CD8-positive, alpha-beta T cell (primary cell): ENCODE measurements at regions of chr20 and their contacts with region 1.

Region 1: DNA sequence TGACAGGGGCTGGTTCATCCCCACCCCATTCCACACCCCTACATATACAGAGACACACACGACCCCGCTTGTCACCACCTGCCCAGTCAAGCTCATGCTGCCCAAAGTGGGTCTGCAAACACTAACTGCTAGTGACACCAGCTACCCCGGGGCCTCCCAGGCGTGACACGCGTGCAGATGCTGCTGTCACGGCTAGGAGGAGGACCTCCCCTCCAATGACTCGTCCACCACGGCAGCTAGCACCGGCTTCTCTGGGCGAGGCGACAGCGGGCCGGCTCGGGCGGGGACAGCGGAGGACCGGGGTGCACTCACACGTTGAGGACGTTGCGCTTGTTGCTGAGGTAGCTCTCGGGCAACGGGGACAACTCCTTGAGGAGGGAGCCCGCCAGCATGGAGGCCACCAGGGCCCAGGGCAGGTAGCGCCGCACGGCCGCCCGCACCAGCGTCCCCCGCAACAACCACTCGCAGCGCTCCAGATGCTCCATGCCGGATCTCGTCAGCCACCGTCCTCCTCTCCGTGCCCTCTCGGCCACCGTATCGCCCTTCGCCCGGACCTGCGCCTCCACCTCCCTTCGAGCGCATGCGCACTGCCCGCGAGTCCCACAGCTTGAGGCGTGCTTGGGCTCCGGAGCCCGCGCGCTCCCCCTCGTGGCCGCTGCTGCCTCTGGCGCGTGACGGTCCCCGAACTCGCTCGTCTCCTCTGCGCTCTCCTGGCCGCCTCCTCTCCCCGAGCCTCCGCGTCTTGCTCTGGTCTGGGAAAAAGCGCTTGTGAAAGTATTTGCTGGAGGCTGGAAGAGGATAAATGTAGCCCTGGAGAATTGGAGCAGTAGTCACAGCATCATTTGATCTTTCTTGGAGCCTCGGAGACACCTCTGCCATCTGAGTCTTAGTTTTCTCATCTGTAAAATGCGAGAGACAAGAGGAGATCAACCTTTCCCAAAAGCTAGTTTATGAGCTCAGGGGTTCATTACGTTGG is at the start of gene FITM2:
- DNase-seq: peak; percentile 96 to 99 (median 99)
- ATAC-seq: peak; percentile 95
- H3K4me3 ChIP-seq: peak within 1 kb of the TSS; percentile 73 to 89
- H3K4me3 Mint-ChIP-seq: peak within 1 kb of the TSS; percentile 96
- H3K27ac ChIP-seq: peak within 1 kb of the TSS; percentile 38 to 56
- H3K27ac Mint-ChIP-seq: peak within 1 kb of the TSS; percentile 89
- H3K4me1 ChIP-seq: peaks cover 17% of the 10 kb centered on the region
- H3K4me1 Mint-ChIP-seq: peaks cover 33% of the 10 kb centered on the region
- H3K27me3 ChIP-seq: no peaks in the 10 kb centered on the region
- H3K27me3 Mint-ChIP-seq: no peaks in the 10 kb centered on the region
- CTCF ChIP-seq: peak; percentile 87
- total RNA-seq, gene FITM2: 3.3 to 3.4 TPM

Region 2: GRCh38 chr20:43590392-43591323 is 720.3 kb before region 1 on chr20 and contains the start of gene IFT52:
- CTCF ChIA-PET with region 1: no interaction called
- POLR2A ChIA-PET with region 1: no interaction called
- intact Hi-C with region 1: loop called in 1 of 2 experiments (anchors 2 kb)
- DNase-seq: peak; percentile 79 to 96 (median 89)
- ATAC-seq: peak; percentile 98
- H3K4me3 ChIP-seq: peak within 1 kb of the TSS; percentile 62 to 88
- H3K4me3 Mint-ChIP-seq: peak within 1 kb of the TSS; percentile 91
- H3K27ac ChIP-seq: peak within 1 kb of the TSS; percentile 74 to 96
- H3K27ac Mint-ChIP-seq: peak within 1 kb of the TSS; percentile 96
- H3K4me1 ChIP-seq: peaks cover 13% of the 10 kb centered on the region
- H3K4me1 Mint-ChIP-seq: peaks cover 20% of the 10 kb centered on the region
- H3K27me3 ChIP-seq: no peaks in the 10 kb centered on the region
- H3K27me3 Mint-ChIP-seq: peaks cover 3% of the 10 kb centered on the region
- CTCF ChIP-seq: no peak
- total RNA-seq, gene IFT52: 11.5 to 14.1 TPM

Region 3: GRCh38 chr20:44115762-44116644 is 194.9 kb before region 1 on chr20:
- CTCF ChIA-PET with region 1: interaction called, 6 read pairs
- POLR2A ChIA-PET with region 1: no interaction called
- intact Hi-C with region 1: loop called in 1 of 2 experiments (anchors 5 kb)
- DNase-seq: no peak
- ATAC-seq: no peak
- H3K4me3 ChIP-seq: no peak overlapping the region
- H3K4me3 Mint-ChIP-seq: no peak overlapping the region
- H3K27ac ChIP-seq: no peak overlapping the region
- H3K27ac Mint-ChIP-seq: no peak overlapping the region
- H3K4me1 ChIP-seq: peaks cover 3% of the 10 kb centered on the region
- H3K4me1 Mint-ChIP-seq: peaks cover 5% of the 10 kb centered on the region
- H3K27me3 ChIP-seq: peaks cover 0 to 6% of the 10 kb centered on the region in 2 experiments
- H3K27me3 Mint-ChIP-seq: peaks cover 42% of the 10 kb centered on the region
- CTCF ChIP-seq: no peak

Region 4: GRCh38 chr20:44166008-44166407 is 144.9 kb before region 1 on chr20:
- CTCF ChIA-PET with region 1: no interaction called
- POLR2A ChIA-PET with region 1: no interaction called
- intact Hi-C with region 1: no loop called
- DNase-seq: no peak
- ATAC-seq: no peak
- H3K4me3 ChIP-seq: no peak overlapping the region
- H3K4me3 Mint-ChIP-seq: no peak overlapping the region
- H3K27ac ChIP-seq: no peak overlapping the region
- H3K27ac Mint-ChIP-seq: no peak overlapping the region
- H3K4me1 ChIP-seq: no peaks in the 10 kb centered on the region
- H3K4me1 Mint-ChIP-seq: no peaks in the 10 kb centered on the region
- H3K27me3 ChIP-seq: no peaks in the 10 kb centered on the region
- H3K27me3 Mint-ChIP-seq: peaks cover 51% of the 10 kb centered on the region
- CTCF ChIP-seq: no peak

Region 5: DNA sequence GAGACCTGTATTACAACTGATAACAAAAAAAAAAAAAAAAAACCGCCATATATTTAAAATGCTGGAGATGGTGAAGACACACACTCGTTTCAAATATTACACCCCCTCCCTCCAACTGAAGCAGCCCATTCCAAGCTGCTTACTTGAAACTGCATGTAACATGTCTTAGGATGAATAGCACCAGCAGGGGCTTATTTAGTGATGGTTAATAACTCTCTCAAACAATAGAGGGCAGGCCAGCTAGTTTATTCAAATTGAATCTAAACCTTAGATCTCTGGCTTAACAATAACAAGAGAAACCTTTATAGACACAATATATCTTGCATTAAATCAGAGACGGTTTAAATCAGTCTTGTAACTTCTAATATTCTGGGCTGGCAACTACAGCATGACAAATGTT is 114.7 kb before region 1 on chr20:
- CTCF ChIA-PET with region 1: interaction called, 18 read pairs
- POLR2A ChIA-PET with region 1: no interaction called
- intact Hi-C with region 1: no loop called
- DNase-seq: no peak
- ATAC-seq: peak; percentile 61
- H3K4me3 ChIP-seq: no peak overlapping the region
- H3K4me3 Mint-ChIP-seq: no peak overlapping the region
- H3K27ac ChIP-seq: no peak overlapping the region
- H3K27ac Mint-ChIP-seq: no peak overlapping the region
- H3K4me1 ChIP-seq: no peaks in the 10 kb centered on the region
- H3K4me1 Mint-ChIP-seq: peaks cover 24% of the 10 kb centered on the region
- H3K27me3 ChIP-seq: no peaks in the 10 kb centered on the region
- H3K27me3 Mint-ChIP-seq: no peaks in the 10 kb centered on the region
- CTCF ChIP-seq: no peak

Region 6: DNA sequence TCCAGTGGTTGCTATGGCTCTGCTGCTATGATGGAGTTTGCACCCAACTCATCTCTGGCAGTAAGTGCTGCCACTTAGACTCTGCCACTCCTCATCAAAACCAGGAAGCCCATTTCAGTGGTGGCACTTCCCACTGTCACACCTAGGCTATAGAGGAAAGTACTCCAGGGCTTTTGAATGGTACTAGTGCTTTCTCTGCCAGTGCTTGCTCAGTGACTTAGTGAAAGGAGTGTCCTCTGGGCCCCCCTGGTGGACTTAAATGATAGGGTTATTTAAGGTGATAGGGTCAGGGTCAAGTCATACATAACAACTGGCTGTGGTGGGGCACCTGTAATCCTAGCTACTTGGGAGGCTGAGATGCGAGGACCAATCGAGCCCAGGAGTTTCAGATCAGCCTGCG is 22.7 kb before region 1 on chr20:
- CTCF ChIA-PET with region 1: interaction called, 12 read pairs
- POLR2A ChIA-PET with region 1: interaction called, 4 read pairs
- intact Hi-C with region 1: no loop called
- DNase-seq: peak in 2 of 9 experiments; percentile 35 to 48
- ATAC-seq: peak; percentile 48
- H3K4me3 ChIP-seq: no peak overlapping the region
- H3K4me3 Mint-ChIP-seq: no peak overlapping the region
- H3K27ac ChIP-seq: no peak overlapping the region
- H3K27ac Mint-ChIP-seq: no peak overlapping the region
- H3K4me1 ChIP-seq: peaks cover 3% of the 10 kb centered on the region
- H3K4me1 Mint-ChIP-seq: no peaks in the 10 kb centered on the region
- H3K27me3 ChIP-seq: no peaks in the 10 kb centered on the region
- H3K27me3 Mint-ChIP-seq: no peaks in the 10 kb centered on the region
- CTCF ChIP-seq: no peak

Region 7: DNA sequence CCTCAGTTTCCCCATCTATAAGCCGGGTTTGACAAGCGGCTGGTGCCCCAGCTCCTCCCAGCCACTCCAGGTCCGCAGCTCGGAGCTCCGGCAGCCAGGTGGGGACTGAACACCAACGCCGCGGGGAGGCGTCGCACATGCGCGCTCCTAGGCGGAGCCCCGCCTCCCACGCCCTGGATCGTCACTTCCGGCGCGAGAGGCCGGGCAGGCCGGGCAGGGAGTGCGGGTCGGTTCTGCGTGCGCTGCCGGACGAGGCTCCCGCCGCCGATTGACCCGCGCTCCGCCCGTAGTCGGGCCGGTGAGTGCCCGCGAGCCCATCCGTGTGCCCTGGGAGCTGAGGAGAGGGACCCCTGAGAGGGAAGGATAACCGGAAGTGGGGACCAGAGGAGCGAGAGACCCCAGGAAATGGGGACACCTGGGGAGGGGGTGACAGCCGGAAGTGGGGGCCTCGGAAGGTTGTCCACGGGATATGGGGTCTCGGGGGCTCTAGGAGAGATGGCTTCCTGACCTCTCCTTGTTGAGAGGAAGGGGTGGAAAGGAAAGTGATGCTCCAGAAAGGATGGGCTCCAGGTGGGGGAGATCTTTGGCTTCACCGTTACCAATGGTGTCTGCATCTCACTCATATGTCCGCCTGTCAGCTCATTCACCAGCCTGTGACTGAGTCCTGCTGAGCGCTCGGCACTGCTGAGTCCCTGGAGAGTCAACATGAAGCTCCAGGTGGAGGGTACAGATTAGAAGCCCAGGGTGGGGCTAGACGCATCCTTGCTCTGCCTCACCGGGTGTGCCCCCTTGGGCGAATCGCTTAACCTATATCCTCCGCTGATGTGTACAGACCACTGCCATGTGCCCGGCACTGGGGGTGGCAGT is 165.0 kb after region 1 on chr20 and contains the start of gene TTPAL:
- CTCF ChIA-PET with region 1: no interaction called
- POLR2A ChIA-PET with region 1: no interaction called
- intact Hi-C with region 1: loop called (anchors 1 to 5 kb)
- DNase-seq: peak; percentile 72 to 95 (median 88)
- ATAC-seq: peak; percentile 96
- H3K4me3 ChIP-seq: peak within 1 kb of the TSS; percentile 82 to 90
- H3K4me3 Mint-ChIP-seq: peak within 1 kb of the TSS; percentile 86
- H3K27ac ChIP-seq: peak within 1 kb of the TSS; percentile 94 to 96
- H3K27ac Mint-ChIP-seq: peak within 1 kb of the TSS; percentile 95
- H3K4me1 ChIP-seq: peaks cover 16% of the 10 kb centered on the region
- H3K4me1 Mint-ChIP-seq: peaks cover 27% of the 10 kb centered on the region
- H3K27me3 ChIP-seq: no peaks in the 10 kb centered on the region
- H3K27me3 Mint-ChIP-seq: no peaks in the 10 kb centered on the region
- CTCF ChIP-seq: peak; percentile 26
- total RNA-seq, gene TTPAL: 12.3 TPM